ENCODE measurements at regions of chr5 and their contacts with region 1.

Region 1: GRCh38 chr5:177403792-177404640 is 3.6 kb upstream of the PFN3 start:
- DNase-seq: peak; percentile 89
- ATAC-seq: peak; percentile 83
- H3K4me3 Mint-ChIP-seq: peak overlapping the region; percentile 84
- H3K27ac Mint-ChIP-seq: peak overlapping the region; percentile 74
- H3K4me1 Mint-ChIP-seq: peaks cover 35% of the 10 kb centered on the region
- H3K27me3 Mint-ChIP-seq: peaks cover 22% of the 10 kb centered on the region

Region 2: GRCh38 chr5:177311723-177312648 is 92.0 kb before region 1 on chr5 and contains the start of gene MXD3:
- POLR2A ChIA-PET with region 1: interaction called, 14 read pairs
- DNase-seq: peak; percentile 97
- ATAC-seq: peak; percentile 82
- H3K4me3 Mint-ChIP-seq: peak within 1 kb of the TSS; percentile 100
- H3K27ac Mint-ChIP-seq: peak within 1 kb of the TSS; percentile 98
- H3K4me1 Mint-ChIP-seq: peaks cover 32% of the 10 kb centered on the region
- H3K27me3 Mint-ChIP-seq: no peaks in the 10 kb centered on the region
- total RNA-seq, gene MXD3: 85.0 to 94.0 TPM

Region 3: DNA sequence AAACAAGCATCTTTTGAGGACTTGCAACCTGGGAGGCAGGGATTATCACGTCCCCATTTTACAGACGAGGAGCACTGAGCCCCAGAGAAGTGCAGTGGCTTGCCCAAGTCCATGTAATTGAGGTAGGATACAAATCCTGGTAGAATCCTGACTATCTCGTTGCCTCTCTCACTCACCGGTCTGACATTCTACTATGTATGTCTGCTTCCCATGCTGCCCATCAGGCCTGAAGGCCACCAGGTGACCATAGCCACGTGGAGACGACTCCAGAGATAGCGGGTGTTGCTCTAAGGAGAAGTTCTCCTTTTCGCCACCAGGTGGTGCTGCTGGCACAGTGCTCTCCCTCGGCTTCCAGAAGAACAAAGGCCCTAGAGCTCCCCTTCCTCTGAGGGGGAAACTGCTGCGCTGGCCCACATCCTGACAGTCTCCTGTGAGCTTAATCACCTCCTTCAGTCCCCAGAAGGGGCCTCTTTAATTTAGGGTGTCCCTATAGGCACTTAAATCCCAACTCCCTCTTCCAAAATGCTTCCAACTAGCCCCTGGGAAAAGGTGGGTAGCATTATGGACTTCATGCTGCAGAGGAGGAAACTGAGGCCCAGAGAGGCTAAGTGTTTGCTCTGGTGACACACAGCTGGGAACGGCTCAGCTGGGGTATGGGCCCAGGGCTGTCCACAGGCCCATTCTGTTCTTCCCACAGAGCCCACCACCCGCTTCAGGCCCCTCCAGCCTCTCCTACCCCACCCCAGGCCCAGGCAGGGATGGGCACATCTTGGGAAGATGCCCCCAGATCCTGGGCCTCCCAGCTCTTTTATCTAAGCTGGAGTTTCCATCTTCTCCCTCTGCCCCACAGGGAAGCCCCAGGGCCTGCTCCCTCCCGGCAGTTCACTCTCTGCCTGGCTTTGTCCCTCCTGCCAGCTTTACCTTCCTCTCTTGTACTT is 13.4 kb before region 1 on chr5:
- POLR2A ChIA-PET with region 1: interaction called, 40 read pairs
- DNase-seq: peak; percentile 83
- ATAC-seq: peak; percentile 88
- H3K4me3 Mint-ChIP-seq: peak overlapping the region; percentile 56
- H3K27ac Mint-ChIP-seq: peak overlapping the region; percentile 88
- H3K4me1 Mint-ChIP-seq: peaks cover 36% of the 10 kb centered on the region
- H3K27me3 Mint-ChIP-seq: peaks cover 3% of the 10 kb centered on the region

Region 4: GRCh38 chr5:177414481-177414880 is 10.5 kb after region 1 on chr5:
- POLR2A ChIA-PET with region 1: no interaction called
- DNase-seq: no peak
- ATAC-seq: no peak
- H3K4me3 Mint-ChIP-seq: no peak overlapping the region
- H3K27ac Mint-ChIP-seq: no peak overlapping the region
- H3K4me1 Mint-ChIP-seq: peaks cover 24% of the 10 kb centered on the region
- H3K27me3 Mint-ChIP-seq: no peaks in the 10 kb centered on the region

Region 5: DNA sequence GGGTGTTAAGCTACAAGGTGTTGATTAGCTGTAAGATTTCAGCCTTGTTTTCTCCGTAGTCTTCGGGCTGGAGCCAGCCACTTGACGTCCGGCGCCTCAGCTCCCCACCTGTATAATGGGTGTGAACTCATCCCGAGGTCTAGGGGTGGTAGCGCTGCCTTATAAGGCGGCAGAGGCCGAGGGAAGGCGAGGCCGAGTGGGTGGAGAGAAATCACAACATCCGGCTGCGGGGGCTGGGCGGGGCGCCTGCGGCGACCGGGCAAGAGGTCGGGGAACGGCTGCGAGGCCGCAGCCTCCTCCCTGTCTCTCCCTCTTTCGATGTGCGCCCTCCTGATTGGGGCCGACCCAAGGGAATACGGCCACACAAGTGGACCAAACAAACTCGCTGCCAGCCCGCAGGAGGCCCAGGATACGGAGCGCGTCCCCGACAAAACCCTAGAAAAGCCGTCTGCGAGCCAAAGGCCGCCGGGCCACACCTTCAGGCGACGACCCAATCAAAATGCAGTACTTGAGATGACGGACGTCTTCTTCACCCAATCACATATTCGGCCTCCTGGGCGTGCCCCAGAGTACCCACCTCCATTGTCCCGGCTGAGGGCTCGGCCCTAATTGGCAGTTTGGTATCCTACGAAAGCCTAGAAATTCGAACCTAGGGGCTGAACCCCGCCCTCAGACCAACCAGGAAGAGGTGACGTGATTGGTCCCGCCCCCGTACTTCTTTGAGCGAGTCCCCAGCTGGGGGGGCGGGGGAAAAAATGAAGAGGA is 22.0 kb after region 1 on chr5:
- POLR2A ChIA-PET with region 1: interaction called, 145 read pairs
- DNase-seq: peak; percentile 95
- ATAC-seq: peak; percentile 78
- H3K4me3 Mint-ChIP-seq: peak overlapping the region; percentile 98
- H3K27ac Mint-ChIP-seq: peak overlapping the region; percentile 99
- H3K4me1 Mint-ChIP-seq: peaks cover 41% of the 10 kb centered on the region
- H3K27me3 Mint-ChIP-seq: no peaks in the 10 kb centered on the region

Region 6: GRCh38 chr5:177440211-177440971 is 36.4 kb after region 1 on chr5:
- POLR2A ChIA-PET with region 1: interaction called, 122 read pairs
- DNase-seq: peak; percentile 31
- ATAC-seq: peak; percentile 4
- H3K4me3 Mint-ChIP-seq: no peak overlapping the region
- H3K27ac Mint-ChIP-seq: peak overlapping the region; percentile 6
- H3K4me1 Mint-ChIP-seq: peaks cover 28% of the 10 kb centered on the region
- H3K27me3 Mint-ChIP-seq: no peaks in the 10 kb centered on the region

Region 7: DNA sequence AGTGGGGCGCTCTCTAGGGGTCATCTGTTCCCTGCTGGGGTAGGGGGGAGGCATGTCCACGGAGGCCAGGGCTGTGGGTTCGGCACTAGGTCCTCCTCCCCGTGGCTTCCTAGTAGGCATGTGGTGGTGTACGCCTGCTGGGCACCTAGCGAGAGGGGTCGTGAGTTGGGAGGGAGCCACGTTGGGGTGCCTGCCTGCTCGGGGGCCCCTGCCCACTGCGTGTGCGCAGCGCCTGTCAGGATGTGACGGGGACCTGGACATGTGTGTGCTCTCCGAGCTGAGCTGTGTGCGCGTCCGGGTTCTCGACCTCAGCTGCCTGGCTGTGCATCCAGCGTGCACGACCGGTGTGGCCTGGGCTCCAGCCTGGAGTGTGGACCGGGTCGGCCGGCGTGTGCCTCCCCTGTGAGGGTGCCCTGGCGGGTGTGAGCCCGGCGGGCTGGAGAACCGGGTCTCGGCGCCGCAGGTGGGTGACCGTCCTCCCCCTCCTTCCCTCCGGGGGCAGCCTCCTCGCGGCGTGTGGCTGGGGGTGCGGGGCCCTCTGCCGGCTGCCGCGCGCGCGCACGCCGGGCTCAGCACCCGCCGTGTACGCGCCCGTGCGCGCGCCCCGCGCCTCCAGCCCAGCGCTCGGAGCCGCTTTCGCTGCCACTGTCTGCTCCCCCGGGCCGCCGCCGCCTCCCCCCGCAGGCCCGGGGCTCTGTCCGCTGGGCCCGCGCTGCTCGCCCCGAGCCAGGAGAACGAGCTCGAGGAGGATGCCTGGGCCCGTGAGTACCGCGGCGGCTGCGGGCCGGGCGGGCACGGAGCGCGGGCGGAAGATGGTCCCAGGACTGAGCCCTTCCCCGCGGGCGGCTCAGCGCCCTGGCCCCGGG is 42.4 kb after region 1 on chr5 and contains the start of gene PRR7:
- POLR2A ChIA-PET with region 1: interaction called, 122 read pairs
- DNase-seq: peak; percentile 89
- ATAC-seq: peak; percentile 76
- H3K4me3 Mint-ChIP-seq: peak within 1 kb of the TSS; percentile 80
- H3K27ac Mint-ChIP-seq: peak within 1 kb of the TSS; percentile 87
- H3K4me1 Mint-ChIP-seq: peaks cover 30% of the 10 kb centered on the region
- H3K27me3 Mint-ChIP-seq: no peaks in the 10 kb centered on the region
- total RNA-seq, gene PRR7: 10.0 to 10.6 TPM

Region 8: GRCh38 chr5:177454397-177455035 is 50.5 kb after region 1 on chr5:
- POLR2A ChIA-PET with region 1: interaction called, 122 read pairs
- DNase-seq: peak; percentile 98
- ATAC-seq: peak; percentile 51
- H3K4me3 Mint-ChIP-seq: peak overlapping the region; percentile 85
- H3K27ac Mint-ChIP-seq: peak overlapping the region; percentile 64
- H3K4me1 Mint-ChIP-seq: peaks cover 11% of the 10 kb centered on the region
- H3K27me3 Mint-ChIP-seq: peaks cover 6% of the 10 kb centered on the region

Region 9: DNA sequence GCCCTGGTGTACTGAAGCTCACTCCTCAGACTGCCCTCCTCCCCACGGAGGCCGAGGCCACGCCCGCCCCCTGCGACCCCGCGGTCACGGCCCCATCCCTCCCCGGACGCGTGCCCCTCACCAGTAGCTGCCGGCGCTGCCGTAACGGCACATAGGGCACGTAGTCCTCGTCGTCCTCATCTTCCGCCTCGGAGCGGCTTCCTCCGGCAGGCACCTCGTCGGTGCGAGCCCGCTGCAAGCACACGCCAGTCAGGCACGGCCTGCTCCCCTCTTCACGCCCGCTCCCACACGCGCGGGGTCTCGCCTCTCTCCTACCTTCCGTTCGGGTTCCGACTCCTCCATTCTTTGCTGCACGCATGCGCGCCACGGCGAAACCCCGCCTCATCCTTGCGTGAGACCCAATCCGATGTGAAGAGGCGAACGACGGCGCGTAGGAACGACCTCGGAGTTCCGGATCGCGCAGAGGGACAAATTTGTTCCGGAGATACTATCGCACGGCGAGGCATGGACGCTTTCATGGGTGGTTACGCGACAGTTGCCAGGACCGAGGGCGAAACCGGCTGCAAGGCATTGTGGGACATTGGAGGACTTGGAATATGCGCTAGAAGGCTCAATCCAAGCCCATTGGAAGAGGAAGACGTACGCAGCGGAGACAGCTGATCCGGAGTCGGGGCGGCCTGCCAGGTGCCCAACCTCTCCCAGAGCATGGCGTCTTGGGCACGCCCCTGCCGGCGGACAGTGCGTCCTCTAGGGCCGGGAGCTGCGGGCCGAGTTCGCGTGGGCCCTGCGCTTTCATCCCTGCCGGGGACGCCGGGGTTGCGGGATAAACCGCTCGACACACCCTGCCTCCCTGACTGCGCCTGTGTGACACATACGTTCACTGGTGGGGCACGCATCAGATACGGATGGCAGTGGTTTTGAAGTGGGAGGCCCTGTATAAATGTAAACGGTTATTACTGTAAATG is 112.9 kb after region 1 on chr5 and contains the start of gene DDX41:
- POLR2A ChIA-PET with region 1: no interaction called
- DNase-seq: peak; percentile 97
- ATAC-seq: peak; percentile 91
- H3K4me3 Mint-ChIP-seq: peak within 1 kb of the TSS; percentile 99
- H3K27ac Mint-ChIP-seq: peak within 1 kb of the TSS; percentile 90
- H3K4me1 Mint-ChIP-seq: peaks cover 41% of the 10 kb centered on the region
- H3K27me3 Mint-ChIP-seq: no peaks in the 10 kb centered on the region
- total RNA-seq, gene DDX41: 132 to 135 TPM